GM12878 (cell line): ENCODE measurements at regions of chr11 and their contacts with region 1.

Region 1: DNA sequence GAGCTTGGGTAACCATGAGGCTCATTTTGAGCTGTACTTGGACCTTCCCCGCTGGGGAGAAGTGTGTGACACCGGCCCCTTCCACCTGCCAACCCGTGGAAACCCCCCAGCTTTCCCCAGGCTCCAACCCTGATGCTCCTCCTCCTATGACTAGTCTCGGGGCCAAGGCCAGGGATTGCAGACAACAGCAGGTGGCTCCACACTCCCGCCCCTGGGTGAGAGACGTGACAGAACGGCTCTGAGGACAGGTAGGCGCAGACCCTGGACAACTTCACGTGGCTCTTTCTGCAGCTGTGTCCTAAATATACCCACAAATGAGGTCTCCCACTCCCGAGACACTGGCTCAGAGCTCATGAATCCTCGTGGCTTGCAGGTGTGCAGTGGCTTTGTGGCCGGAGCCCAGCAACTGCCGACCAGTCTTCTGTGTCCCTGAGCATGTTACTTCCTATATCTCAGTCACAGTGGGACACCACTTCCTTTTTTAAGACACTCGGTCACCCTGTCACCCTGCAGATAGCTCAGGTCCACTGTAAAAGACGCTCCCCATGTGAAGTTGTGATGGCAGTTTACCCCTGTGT is 55.2 kb downstream of the NECTIN1 start:
- DNase-seq: peak; percentile 88
- ATAC-seq: peak; percentile 95
- H3K4me3 ChIP-seq: no peak overlapping the region
- H3K27ac ChIP-seq: peak overlapping the region; percentile 85
- H3K4me1 ChIP-seq: peaks cover 29% of the 10 kb centered on the region
- H3K27me3 ChIP-seq: no peaks in the 10 kb centered on the region
- CTCF ChIP-seq: peak; percentile 54 to 96 (median 67); a peak in 4 of 6 replicates
- EP300 ChIP-seq: peak; percentile 71 to 96
- POLR2A ChIP-seq: peak; percentile 62; the same call in 1 of the 2 replicates
- RAD21 ChIP-seq: peak; percentile 85

Region 2: GRCh38 chr11:119694334-119694733 is 20.5 kb after region 1 on chr11:
- CTCF ChIA-PET with region 1: interaction called, 43 read pairs
- POLR2A ChIA-PET with region 1: interaction called, 5 read pairs
- RAD21 ChIA-PET with region 1: interaction called, 37 read pairs
- SMC1A ChIA-PET with region 1: interaction called, 42 read pairs
- in situ Hi-C with region 1: no loop called
- intact Hi-C with region 1: no loop called
- DNase-seq: no peak
- ATAC-seq: peak; percentile 71
- H3K4me3 ChIP-seq: no peak overlapping the region
- H3K27ac ChIP-seq: no peak overlapping the region
- H3K4me1 ChIP-seq: peaks cover 25% of the 10 kb centered on the region
- H3K27me3 ChIP-seq: no peaks in the 10 kb centered on the region
- CTCF ChIP-seq: peak; percentile 17 to 39 (median 32); a peak in 4 of 6 replicates
- EP300 ChIP-seq: no peak
- POLR2A ChIP-seq: no peak
- RAD21 ChIP-seq: no peak

Region 3: DNA sequence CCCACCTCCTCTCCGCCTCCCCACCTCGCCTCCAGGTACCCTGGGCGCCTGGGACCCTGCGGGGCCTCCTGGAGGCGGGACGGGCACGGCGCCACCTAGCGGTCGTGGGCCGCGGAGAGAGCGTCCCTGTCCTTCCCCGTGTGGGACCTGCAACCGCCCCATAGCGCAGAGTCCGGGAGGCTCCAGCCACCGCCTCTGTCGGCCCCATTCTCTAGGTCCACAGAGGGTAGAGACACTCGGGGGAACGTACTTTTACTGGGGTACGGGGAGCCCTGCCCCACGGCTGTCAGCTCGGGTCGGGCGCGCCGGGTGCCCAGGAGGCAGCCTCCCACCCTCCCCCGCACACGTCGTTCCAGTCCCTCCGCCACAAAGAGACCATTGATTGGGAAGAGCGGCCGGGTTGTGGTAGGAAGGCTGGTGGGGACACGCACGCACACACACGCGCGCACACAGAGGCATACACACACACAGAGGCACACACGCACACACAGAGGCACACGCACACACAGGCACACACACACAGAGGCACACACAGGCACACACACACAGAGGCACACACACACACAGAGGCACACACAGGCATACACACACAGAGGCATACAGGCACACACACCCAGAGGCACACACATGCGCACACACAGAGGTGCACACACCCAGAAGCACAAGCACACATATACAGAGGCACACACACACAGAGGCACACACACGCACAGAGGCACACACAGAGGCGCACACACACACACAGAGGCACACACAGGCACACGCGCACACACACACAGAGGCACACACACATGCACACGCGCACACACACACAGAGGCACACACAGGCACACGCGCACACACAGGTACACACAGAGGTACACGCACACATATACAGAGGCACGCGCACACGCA is 67.8 kb after region 1 on chr11:
- CTCF ChIA-PET with region 1: interaction called, 21 read pairs
- POLR2A ChIA-PET with region 1: interaction called, 4 read pairs
- RAD21 ChIA-PET with region 1: interaction called, 3 read pairs
- SMC1A ChIA-PET with region 1: interaction called, 5 read pairs
- in situ Hi-C with region 1: no loop called
- intact Hi-C with region 1: no loop called
- DNase-seq: no peak
- ATAC-seq: peak; percentile 98
- H3K4me3 ChIP-seq: no peak overlapping the region
- H3K27ac ChIP-seq: no peak overlapping the region
- H3K4me1 ChIP-seq: no peaks in the 10 kb centered on the region
- H3K27me3 ChIP-seq: peaks cover 0 to 3% of the 10 kb centered on the region in 2 experiments; a peak in 3 of 4 replicates
- CTCF ChIP-seq: peak; percentile 71 to 87 (median 81)
- EP300 ChIP-seq: no peak
- POLR2A ChIP-seq: no peak
- RAD21 ChIP-seq: peak; percentile 39; the same call in 1 of the 2 replicates

Region 4: GRCh38 chr11:120068114-120068573 is 394.3 kb after region 1 on chr11:
- CTCF ChIA-PET with region 1: interaction called, 5 read pairs
- POLR2A ChIA-PET with region 1: no interaction called
- RAD21 ChIA-PET with region 1: interaction called, 13 read pairs
- SMC1A ChIA-PET with region 1: interaction called, 3 read pairs
- in situ Hi-C with region 1: no loop called
- intact Hi-C with region 1: no loop called
- DNase-seq: no peak
- ATAC-seq: peak; percentile 69
- H3K4me3 ChIP-seq: no peak overlapping the region
- H3K27ac ChIP-seq: no peak overlapping the region
- H3K4me1 ChIP-seq: peaks cover 7% of the 10 kb centered on the region
- H3K27me3 ChIP-seq: no peaks in the 10 kb centered on the region; a peak in 1 of 4 replicates
- CTCF ChIP-seq: no peak
- EP300 ChIP-seq: no peak
- POLR2A ChIP-seq: no peak
- RAD21 ChIP-seq: no peak

Region 5: DNA sequence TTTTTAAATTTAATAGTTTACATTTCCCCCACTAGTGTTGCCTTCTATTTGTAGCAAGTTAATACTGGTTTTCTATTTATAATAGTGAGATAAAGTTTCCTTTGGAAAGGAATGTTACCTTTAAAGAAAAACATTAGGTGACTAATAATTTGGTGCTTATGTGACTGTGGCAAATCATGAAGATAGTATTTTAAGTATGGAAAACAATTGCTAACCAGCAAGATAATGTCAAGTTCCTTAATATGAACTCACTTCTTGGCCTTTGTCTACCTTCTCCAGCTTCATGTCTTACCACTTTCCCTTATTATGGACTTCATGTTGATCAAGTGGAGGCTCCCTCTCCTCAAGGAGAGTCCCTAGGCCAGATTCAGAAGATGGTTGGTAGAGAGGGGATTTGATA is 689.6 kb after region 1 on chr11:
- CTCF ChIA-PET with region 1: no interaction called
- POLR2A ChIA-PET with region 1: no interaction called
- RAD21 ChIA-PET with region 1: no interaction called
- SMC1A ChIA-PET with region 1: no interaction called
- in situ Hi-C with region 1: no loop called
- intact Hi-C with region 1: no loop called
- DNase-seq: no peak
- ATAC-seq: no peak
- H3K4me3 ChIP-seq: no peak overlapping the region
- H3K27ac ChIP-seq: no peak overlapping the region
- H3K4me1 ChIP-seq: no peaks in the 10 kb centered on the region
- H3K27me3 ChIP-seq: no peaks in the 10 kb centered on the region
- CTCF ChIP-seq: no peak
- EP300 ChIP-seq: no peak
- POLR2A ChIP-seq: no peak
- RAD21 ChIP-seq: no peak